HEK293 (cell line): ENCODE measurements at regions of chr15 and their contacts with region 1.

Region 1: GRCh38 chr15:42131826-42132806 is 24.3 kb downstream of the PLA2G4F start:
- H3K4me3 ChIP-seq: no peak overlapping the region
- H3K27ac ChIP-seq: no peak overlapping the region
- H3K4me1 ChIP-seq: peaks cover 9% of the 10 kb centered on the region
- CTCF ChIP-seq: no peak

Region 2: GRCh38 chr15:42084460-42085235 is 47.5 kb before region 1 on chr15:
- CTCF ChIA-PET with region 1: interaction called, 11 read pairs
- POLR2A ChIA-PET with region 1: no interaction called
- H3K4me3 ChIP-seq: no peak overlapping the region
- H3K27ac ChIP-seq: no peak overlapping the region
- H3K4me1 ChIP-seq: no peaks in the 10 kb centered on the region
- CTCF ChIP-seq: peak; percentile 78

Region 3: DNA sequence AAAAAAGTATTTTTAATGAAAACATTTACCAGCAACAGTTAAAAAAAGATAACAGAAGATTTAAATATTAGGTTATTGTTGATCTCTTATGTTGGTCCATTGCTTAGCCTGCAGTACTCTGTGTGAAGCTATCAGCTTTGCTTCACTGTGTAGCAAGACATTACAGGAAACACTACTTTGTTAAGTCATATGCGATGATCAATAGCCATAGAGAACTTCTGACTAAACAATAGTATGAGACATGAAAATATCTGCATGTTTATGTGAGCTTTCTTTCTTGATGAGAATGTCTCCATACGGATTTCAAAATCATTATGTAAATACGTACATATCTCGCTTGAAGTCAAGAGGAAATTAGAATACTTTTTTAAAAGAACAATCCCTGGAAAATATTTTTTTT is 200.2 kb after region 1 on chr15:
- CTCF ChIA-PET with region 1: no interaction called
- POLR2A ChIA-PET with region 1: no interaction called
- H3K4me3 ChIP-seq: no peak overlapping the region
- H3K27ac ChIP-seq: no peak overlapping the region
- H3K4me1 ChIP-seq: no peaks in the 10 kb centered on the region
- CTCF ChIP-seq: no peak